GM10248 (cell line): ENCODE measurements at regions of chr19 and their contacts with region 1.

Region 1: DNA sequence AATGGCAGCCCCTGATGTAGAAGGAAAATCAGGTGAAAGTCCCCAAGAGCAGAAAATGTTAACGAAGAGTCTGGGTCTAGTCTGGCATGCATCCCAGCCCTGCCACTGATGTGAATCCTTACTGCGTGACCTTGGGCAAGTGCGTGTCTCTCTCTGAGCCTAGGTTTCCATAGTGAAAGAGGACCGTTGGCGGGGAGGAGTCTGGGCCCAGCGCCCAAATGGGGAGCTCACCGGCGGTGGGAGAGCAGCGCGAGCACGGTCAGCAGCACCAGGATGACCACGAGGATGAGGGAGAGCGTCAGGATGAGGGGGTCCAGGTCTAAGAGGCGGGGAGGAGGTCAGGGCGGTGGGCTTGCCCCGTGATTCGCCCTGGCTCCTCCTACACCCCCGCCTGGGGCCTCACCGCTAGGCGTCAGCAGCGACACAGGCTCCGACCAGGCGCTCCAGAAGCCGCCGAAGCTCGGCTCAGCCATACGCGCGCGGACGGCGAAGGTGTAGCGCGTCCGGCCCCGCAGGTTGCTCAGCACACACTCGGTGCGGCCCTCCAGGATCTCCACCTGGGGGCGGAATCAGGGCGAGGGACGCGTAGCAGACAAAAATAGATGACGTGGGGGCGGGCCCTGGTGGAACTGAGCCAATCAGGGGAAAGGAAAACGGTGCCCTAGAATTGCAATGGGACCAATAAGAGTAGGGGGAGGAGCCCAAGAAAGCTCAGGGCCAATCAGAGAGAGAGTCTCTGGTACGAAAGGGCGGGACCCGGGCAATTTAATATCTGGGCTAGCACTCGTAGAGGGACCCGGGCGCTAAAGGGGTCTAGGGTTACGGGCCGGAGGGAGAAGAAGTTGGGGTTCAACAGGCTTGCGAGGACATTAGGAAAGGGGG is 3.2 kb downstream of the EPOR start:
- DNase-seq: peak; percentile 98
- CTCF ChIP-seq: peak; percentile 67

Region 2: DNA sequence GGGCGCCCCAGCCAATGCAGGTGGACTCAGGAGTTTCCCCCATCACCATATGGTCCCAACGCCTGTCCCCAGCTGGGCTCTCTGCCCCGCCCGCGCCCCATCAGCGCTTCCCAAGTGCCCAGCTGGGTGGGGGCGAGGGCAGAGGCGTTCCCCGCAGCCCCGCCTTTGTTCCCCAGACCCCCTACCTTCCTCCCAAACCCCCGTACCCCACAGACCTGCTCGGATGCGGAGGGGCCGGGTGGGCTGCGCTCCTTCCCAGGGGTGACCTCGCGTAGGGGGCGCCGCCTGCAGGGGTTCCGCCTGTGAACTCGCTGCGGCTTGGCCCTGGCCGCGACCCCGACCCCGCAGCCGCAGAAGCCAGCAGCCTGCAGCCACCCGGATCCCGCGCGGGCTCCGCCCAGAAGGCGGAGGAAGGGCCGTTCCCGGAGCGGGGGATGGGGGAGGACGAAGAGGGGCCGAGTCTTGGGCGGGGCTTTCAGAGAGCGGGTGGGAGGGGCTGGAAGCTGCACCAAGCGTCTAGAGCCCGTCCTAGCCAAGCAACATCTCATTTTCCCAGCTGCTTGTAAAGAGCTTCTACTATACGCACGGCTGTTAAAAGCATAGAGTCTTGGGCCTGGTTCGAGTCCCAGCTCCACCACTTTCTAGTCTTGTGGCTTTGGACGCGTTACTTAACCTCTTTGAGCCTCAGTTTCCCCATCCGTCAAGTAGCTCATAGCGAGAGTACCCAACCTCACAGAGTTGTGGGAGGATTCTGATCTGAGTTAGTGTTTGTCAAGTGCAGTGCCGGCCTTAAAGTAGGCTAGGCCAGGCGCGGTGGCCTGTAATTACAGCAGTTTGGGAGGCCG is 41.4 kb before region 1 on chr19 and contains the start of gene RAB3D:
- CTCF ChIA-PET with region 1: interaction called, 11 read pairs
- POLR2A ChIA-PET with region 1: no interaction called
- DNase-seq: peak; percentile 97
- CTCF ChIP-seq: no peak

Region 3: GRCh38 chr19:11367528-11367927 is 13.4 kb before region 1 on chr19:
- CTCF ChIA-PET with region 1: interaction called, 22 read pairs
- POLR2A ChIA-PET with region 1: no interaction called
- DNase-seq: no peak
- CTCF ChIP-seq: no peak

Region 4: DNA sequence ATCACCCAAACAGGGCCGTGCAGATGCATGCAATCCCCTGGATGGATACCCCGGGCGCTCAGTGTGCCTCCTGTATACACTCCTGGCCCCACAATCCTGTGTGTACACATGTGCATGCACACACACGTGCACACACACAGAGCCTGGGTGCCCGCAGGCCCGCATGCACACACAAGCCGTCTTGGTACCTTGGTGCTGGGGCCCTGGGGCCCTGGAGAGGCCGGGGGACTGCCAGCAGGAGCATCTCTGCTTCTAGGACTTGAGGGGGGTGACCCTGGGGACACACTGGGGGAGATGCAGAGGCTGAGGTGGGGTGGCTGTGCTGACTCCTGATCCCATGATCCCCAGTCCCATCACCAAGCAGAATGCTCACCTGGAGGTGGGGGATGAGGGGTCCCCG is 18.8 kb after region 1 on chr19:
- CTCF ChIA-PET with region 1: interaction called, 12 read pairs
- POLR2A ChIA-PET with region 1: no interaction called
- DNase-seq: peak; percentile 15
- CTCF ChIP-seq: no peak

Region 5: DNA sequence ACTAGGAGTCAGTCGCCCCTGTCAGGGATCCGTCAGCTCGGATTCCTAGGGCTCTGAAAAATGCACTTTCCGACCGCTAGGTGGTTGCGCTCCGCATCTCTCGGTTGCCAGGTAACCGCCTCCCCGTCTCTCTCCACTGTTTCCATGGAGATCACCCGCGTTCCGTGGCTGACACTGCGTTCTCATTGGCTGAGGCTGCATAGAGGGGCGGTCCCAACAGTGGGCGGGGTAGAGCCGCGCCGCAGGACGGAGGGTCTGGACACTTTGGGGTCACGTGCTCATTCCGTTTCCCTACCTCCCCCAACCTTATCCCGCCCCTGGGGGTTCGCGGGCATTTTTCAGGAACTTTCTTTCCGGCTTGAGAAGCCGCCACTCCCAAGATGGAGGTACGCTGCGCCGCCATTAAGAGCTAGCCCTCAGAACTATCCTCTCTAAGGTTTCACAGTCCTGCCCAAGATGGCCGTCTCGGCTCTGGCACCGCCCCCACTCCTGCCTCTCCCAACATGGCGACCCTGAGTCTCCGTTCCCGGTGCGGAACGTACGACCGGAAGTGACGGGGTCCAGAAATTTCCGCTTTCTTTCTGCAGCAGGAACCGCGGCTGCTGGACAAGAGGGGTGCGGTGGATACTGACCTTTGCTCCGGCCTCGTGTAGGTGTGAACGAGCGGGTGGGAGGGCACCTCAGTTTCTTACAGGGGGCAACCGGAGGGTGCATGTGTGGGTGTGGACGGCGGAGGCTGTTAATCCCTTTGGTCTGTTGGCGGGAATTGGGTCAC is 54.4 kb after region 1 on chr19 and contains the starts of genes ODAD3 and PRKCSH:
- CTCF ChIA-PET with region 1: interaction called, 15 read pairs
- POLR2A ChIA-PET with region 1: interaction called, 6 read pairs
- DNase-seq: peak; percentile 99
- CTCF ChIP-seq: peak; percentile 78